CD4-positive, alpha-beta T cell (primary cell): ENCODE measurements at regions of chr2 and their contacts with region 1.

Region 1: DNA sequence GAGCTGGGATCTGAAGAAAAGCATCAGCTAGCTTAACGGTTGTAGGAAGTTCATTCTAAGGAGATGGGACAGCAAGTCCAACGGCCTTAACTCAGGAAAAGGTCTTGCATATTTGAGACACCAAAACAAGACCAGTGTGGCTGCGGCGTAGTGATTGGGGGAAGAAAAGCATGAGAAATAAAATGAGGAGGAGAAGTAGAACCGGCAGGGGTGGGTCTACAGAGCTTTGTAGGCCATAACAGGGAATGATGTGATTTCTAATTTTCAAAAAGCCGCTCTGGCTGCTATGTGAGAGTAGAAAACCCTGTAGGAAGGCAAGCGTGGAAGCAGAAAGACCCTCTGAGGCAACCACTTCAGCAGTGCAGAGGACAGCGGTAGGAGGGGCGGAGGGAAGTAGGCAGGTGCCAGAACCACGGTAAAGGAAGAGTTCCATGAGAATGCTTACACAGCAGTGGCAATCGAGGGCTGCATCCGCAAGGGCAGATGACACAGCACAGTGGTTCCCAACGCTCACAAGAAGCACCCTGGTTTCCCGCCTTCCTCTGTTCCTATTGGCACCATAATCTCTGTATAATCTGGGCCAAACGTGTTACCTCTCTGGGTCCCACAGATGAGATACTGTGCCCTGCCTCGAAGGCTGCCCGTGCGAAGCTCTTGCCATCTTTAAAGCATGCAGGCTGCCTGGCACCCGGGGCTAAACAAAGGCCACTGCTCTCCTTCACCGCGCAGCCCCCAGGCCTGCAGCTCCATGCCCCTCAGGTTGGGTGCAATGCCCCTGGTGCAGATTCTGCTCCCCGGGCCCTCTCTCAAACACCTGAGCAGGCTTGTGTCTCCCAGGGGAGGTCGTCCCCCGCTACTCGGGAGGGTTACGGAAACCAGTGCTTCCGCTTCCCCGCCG is 791 bp downstream of the ANKRD39 start:
- DNase-seq: peak in 6 of 14 experiments; percentile 21 to 59 (median 52)
- ATAC-seq: no peak
- H3K4me3 ChIP-seq: peak overlapping the region; percentile 94
- H3K4me3 Mint-ChIP-seq: peak overlapping the region; percentile 92
- H3K27ac ChIP-seq: peak overlapping the region; percentile 65 to 66
- H3K27ac Mint-ChIP-seq: peak overlapping the region; percentile 74
- H3K4me1 ChIP-seq: peaks cover 51% of the 10 kb centered on the region
- H3K4me1 Mint-ChIP-seq: peaks cover 49% of the 10 kb centered on the region
- H3K27me3 ChIP-seq: no peaks in the 10 kb centered on the region
- H3K27me3 Mint-ChIP-seq: no peaks in the 10 kb centered on the region
- CTCF ChIP-seq: no peak

Region 2: GRCh38 chr2:96638144-96639121 is 218.6 kb before region 1 on chr2 and contains the start of gene KANSL3:
- CTCF ChIA-PET with region 1: interaction called, 10 read pairs
- POLR2A ChIA-PET with region 1: interaction called, 11 read pairs
- intact Hi-C with region 1: loop called in 1 of 2 experiments (anchors 2 kb)
- DNase-seq: peak; percentile 79 to 95 (median 84)
- ATAC-seq: peak; percentile 85
- H3K4me3 ChIP-seq: peak within 1 kb of the TSS; percentile 98
- H3K4me3 Mint-ChIP-seq: peak within 1 kb of the TSS; percentile 99
- H3K27ac ChIP-seq: peak within 1 kb of the TSS; percentile 69 to 75
- H3K27ac Mint-ChIP-seq: peak within 1 kb of the TSS; percentile 96
- H3K4me1 ChIP-seq: peaks cover 29% of the 10 kb centered on the region
- H3K4me1 Mint-ChIP-seq: peaks cover 45% of the 10 kb centered on the region
- H3K27me3 ChIP-seq: no peaks in the 10 kb centered on the region
- H3K27me3 Mint-ChIP-seq: no peaks in the 10 kb centered on the region
- CTCF ChIP-seq: no peak
- total RNA-seq, gene KANSL3: 54.4 to 61.8 TPM

Region 3: DNA sequence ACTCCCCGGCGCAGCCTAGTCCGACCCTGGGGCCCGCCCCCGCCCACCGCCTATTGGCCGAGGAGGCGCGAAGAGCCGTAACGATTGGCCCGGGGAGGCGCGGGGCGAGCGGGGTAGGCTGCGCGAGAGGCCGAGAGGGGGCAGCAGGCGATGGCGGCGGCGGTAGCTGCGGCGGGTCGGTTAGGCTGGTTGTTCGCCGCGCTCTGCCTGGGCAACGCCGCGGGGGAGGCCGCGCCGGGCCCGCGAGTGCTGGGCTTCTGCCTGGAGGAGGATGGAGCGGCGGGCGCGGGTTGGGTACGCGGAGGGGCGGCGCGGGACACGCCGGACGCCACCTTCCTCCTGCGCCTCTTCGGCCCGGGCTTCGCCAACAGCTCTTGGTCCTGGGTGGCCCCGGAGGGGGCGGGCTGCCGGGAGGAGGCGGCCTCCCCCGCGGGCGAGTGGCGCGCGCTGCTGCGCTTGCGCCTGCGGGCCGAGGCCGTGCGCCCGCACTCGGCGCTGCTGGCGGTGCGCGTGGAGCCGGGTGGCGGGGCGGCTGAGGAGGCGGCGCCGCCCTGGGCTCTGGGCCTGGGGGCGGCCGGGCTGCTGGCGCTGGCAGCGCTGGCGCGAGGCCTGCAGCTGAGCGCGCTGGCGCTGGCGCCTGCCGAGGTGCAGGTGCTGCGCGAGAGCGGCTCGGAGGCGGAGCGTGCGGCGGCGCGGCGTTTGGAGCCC is 40.7 kb before region 1 on chr2 and contains the start of gene CNNM3:
- CTCF ChIA-PET with region 1: interaction called, 27 read pairs
- POLR2A ChIA-PET with region 1: interaction called, 50 read pairs
- intact Hi-C with region 1: loop called (anchors 5 kb)
- DNase-seq: peak; percentile 90 to 98 (median 96)
- ATAC-seq: peak; percentile 91
- H3K4me3 ChIP-seq: peak within 1 kb of the TSS; percentile 77
- H3K4me3 Mint-ChIP-seq: peak within 1 kb of the TSS; percentile 94
- H3K27ac ChIP-seq: peak within 1 kb of the TSS; percentile 52 to 60
- H3K27ac Mint-ChIP-seq: peak within 1 kb of the TSS; percentile 88
- H3K4me1 ChIP-seq: peaks cover 49% of the 10 kb centered on the region
- H3K4me1 Mint-ChIP-seq: peaks cover 62% of the 10 kb centered on the region
- H3K27me3 ChIP-seq: no peaks in the 10 kb centered on the region
- H3K27me3 Mint-ChIP-seq: no peaks in the 10 kb centered on the region
- CTCF ChIP-seq: peak; percentile 65
- total RNA-seq, gene CNNM3: 48.7 to 53.5 TPM

Region 4: GRCh38 chr2:96868555-96869280 is 11.7 kb after region 1 on chr2:
- CTCF ChIA-PET with region 1: interaction called, 47 read pairs
- POLR2A ChIA-PET with region 1: interaction called, 44 read pairs
- intact Hi-C with region 1: no loop called
- DNase-seq: peak; percentile 25 to 78 (median 55)
- ATAC-seq: peak; percentile 24
- H3K4me3 ChIP-seq: peak overlapping the region; percentile 80
- H3K4me3 Mint-ChIP-seq: peak overlapping the region; percentile 92
- H3K27ac ChIP-seq: peak overlapping the region; percentile 66 to 69
- H3K27ac Mint-ChIP-seq: peak overlapping the region; percentile 85
- H3K4me1 ChIP-seq: peaks cover 55% of the 10 kb centered on the region
- H3K4me1 Mint-ChIP-seq: peaks cover 49% of the 10 kb centered on the region
- H3K27me3 ChIP-seq: no peaks in the 10 kb centered on the region
- H3K27me3 Mint-ChIP-seq: no peaks in the 10 kb centered on the region
- CTCF ChIP-seq: peak; percentile 72

Region 5: DNA sequence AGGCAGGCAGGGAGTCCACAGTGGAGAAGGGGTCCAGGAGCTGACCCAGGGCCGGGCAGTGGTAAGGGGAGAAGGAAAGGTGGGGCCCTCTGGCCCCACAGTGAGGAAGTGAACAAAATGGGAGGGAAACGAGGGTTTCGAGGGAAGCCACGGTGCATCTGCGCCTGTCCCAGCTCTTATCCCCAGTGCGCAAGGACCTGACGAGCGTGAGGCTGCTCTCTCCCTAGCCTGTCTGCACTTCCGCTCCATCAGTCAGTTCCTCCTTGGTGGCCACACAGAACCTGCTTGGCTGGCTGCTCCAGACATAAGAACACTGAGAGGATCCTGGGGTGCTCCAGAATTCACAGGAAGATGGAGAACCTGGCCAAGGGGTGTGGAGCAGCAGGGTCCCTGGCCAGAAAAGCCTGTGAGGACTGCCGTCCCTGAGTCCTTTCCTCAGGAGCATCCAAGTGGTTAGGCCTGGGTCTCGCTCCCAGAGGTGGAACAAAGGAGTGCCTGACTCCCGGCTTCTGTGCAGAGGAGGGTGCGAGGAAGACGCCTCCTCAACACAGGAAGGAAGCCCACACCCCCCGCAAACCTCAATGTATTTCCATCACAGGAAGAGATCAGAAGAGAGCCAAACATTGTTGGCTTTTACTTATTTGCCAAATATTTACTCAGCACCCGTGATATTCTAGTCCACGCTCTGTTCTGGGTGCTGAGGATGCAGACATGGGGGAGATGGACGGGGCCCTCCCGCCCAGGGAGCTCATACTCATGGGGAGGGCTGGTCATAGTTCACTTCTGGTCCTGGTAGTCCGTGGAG is 56.6 kb after region 1 on chr2:
- CTCF ChIA-PET with region 1: interaction called, 14 read pairs
- POLR2A ChIA-PET with region 1: interaction called, 22 read pairs
- intact Hi-C with region 1: loop called in 1 of 2 experiments (anchors 5 kb)
- DNase-seq: peak; percentile 29 to 87 (median 55)
- ATAC-seq: peak; percentile 84
- H3K4me3 ChIP-seq: peak overlapping the region; percentile 42
- H3K4me3 Mint-ChIP-seq: peak overlapping the region; percentile 82
- H3K27ac ChIP-seq: peak overlapping the region; percentile 64 to 68
- H3K27ac Mint-ChIP-seq: peak overlapping the region; percentile 84
- H3K4me1 ChIP-seq: peaks cover 71% of the 10 kb centered on the region
- H3K4me1 Mint-ChIP-seq: peaks cover 89% of the 10 kb centered on the region
- H3K27me3 ChIP-seq: no peaks in the 10 kb centered on the region
- H3K27me3 Mint-ChIP-seq: no peaks in the 10 kb centered on the region
- CTCF ChIP-seq: no peak

Region 6: DNA sequence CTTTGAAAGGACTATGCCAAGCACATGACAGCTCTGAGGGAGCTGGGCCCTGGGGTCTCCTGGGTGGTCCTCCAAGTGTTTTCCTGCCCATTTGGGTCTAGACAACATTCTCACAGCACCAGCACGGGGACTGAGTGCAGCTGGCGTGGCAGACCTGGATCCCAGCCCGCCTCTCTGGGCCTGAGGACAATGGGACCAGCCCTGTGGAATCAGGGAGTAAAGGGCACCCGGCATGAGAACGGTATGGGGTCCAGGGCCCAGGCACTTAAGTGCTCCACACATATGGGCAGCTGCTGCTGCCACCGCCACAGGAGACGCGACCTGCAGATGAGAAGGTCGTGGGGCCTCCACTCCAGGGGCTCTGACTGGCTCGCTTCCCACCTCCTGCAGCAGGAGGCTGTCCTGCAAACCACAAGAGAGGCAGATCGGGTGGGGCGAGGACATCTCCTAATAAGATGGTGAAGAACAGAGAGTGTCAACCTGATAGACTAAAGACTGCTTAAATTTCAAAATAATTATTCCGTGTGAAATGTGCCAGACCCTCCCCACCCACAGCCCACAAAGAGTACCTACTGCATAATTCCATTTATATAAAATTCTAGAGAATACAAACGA is 83.1 kb after region 1 on chr2:
- CTCF ChIA-PET with region 1: interaction called, 17 read pairs
- POLR2A ChIA-PET with region 1: interaction called, 17 read pairs
- intact Hi-C with region 1: no loop called
- DNase-seq: no peak
- ATAC-seq: no peak
- H3K4me3 ChIP-seq: no peak overlapping the region
- H3K4me3 Mint-ChIP-seq: peak overlapping the region; percentile 30
- H3K27ac ChIP-seq: no peak overlapping the region
- H3K27ac Mint-ChIP-seq: peak overlapping the region; percentile 75
- H3K4me1 ChIP-seq: peaks cover 27% of the 10 kb centered on the region
- H3K4me1 Mint-ChIP-seq: peaks cover 38% of the 10 kb centered on the region
- H3K27me3 ChIP-seq: no peaks in the 10 kb centered on the region
- H3K27me3 Mint-ChIP-seq: no peaks in the 10 kb centered on the region
- CTCF ChIP-seq: no peak

Region 7: DNA sequence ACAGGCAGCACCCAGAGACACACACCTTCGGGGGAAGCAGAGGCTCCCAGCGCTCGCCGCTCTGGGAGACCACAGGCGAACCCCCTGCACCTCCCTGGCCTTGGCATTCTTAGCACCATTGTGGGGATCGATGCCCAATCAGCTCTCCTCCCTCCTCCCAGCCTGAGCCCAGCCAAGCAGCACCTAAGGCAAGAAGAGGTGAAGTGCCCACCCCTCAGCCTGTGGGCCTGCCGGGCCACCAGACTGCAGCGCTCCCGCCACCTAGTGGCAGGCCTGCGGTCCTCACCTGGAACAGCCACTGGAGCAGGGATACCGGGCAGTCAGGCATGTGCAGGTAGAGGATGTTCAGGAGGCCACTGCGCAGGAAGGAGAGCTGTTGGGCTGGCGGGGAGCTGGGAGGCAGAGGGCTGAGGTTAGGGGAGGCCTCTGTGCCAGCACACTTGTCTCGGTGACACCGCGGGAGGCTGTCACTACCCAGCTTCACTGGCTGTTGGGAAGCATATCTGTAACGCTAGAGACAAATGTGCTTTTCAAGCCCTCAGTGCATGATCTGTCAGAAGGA is 94.1 kb after region 1 on chr2:
- CTCF ChIA-PET with region 1: interaction called, 45 read pairs
- POLR2A ChIA-PET with region 1: interaction called, 30 read pairs
- intact Hi-C with region 1: loop called (anchors 1 kb)
- DNase-seq: peak; percentile 64 to 89 (median 78)
- ATAC-seq: peak; percentile 97
- H3K4me3 ChIP-seq: no peak overlapping the region
- H3K4me3 Mint-ChIP-seq: no peak overlapping the region
- H3K27ac ChIP-seq: no peak overlapping the region
- H3K27ac Mint-ChIP-seq: no peak overlapping the region
- H3K4me1 ChIP-seq: peaks cover 27% of the 10 kb centered on the region
- H3K4me1 Mint-ChIP-seq: peaks cover 20% of the 10 kb centered on the region
- H3K27me3 ChIP-seq: no peaks in the 10 kb centered on the region
- H3K27me3 Mint-ChIP-seq: no peaks in the 10 kb centered on the region
- CTCF ChIP-seq: peak; percentile 90